ENCODE measurements at regions of chr7 and their contacts with region 1.

Region 1: GRCh38 chr7:132430861-132431822 is 145.1 kb downstream of the PLXNA4 start:
- DNase-seq: peak; percentile 63 to 76 (median 74)
- H3K4me3 ChIP-seq: peak overlapping the region in 1 of 2 donors; percentile 1
- H3K4me3 Mint-ChIP-seq: peak overlapping the region in 7 of 8 donors; percentile 5 to 73 (median 62)
- H3K27ac ChIP-seq: peak overlapping the region; percentile 35
- H3K27ac Mint-ChIP-seq: peak overlapping the region; percentile 39 to 91 (median 77)
- H3K4me1 ChIP-seq: peaks cover 72% of the 10 kb centered on the region
- H3K4me1 Mint-ChIP-seq: peaks cover 44 to 84% (median 67%) of the 10 kb centered on the region in 4 donors
- H3K27me3 ChIP-seq: no peaks in the 10 kb centered on the region
- H3K27me3 Mint-ChIP-seq: no peaks in the 10 kb centered on the region

Region 2: GRCh38 chr7:132472463-132473120 is 41.5 kb after region 1 on chr7:
- CTCF ChIA-PET with region 1: interaction called, 4 read pairs
- POLR2A ChIA-PET with region 1: interaction called, 3 read pairs
- intact Hi-C with region 1: loop called (anchors 2 kb)
- DNase-seq: no peak
- H3K4me3 ChIP-seq: no peak overlapping the region
- H3K4me3 Mint-ChIP-seq: peak overlapping the region in 1 of 8 donors; percentile 53
- H3K27ac ChIP-seq: no peak overlapping the region
- H3K27ac Mint-ChIP-seq: no peak overlapping the region
- H3K4me1 ChIP-seq: peaks cover 13% of the 10 kb centered on the region
- H3K4me1 Mint-ChIP-seq: peaks cover 8 to 19% (median 14%) of the 10 kb centered on the region in 4 donors
- H3K27me3 ChIP-seq: no peaks in the 10 kb centered on the region
- H3K27me3 Mint-ChIP-seq: peaks cover 2 to 3% of the 10 kb centered on the region in 2 donors

Region 3: DNA sequence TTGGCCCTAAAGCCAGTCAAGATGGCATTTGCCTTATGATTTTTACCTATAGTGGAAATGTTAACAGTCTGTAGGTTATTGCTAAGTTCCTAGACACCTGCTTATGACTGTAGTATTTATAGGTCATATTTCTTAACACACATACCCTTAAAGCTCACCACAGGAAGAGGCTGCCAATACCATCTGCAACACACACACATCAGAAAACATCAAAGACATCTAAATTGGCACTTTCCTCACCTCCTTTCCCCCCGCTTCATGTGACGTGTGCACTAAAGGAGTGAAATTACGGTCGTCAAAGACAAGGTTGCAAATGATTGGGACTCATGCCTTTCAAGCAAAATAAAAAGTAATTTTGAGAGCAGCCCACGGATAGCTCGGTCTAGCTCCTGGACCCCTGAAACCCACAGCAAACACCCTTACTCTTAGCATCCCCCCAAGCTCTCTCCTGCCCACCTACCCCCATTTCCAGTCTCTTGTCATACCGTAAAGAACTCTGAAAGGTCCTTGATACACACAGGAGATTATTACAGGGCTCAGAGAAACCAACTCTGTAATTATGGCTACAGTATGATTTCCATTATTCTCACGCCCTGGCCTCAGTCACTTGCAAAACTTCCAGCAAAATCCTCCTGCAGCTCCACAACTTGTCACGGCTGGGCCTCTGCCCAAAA is 54.6 kb after region 1 on chr7:
- CTCF ChIA-PET with region 1: no interaction called
- POLR2A ChIA-PET with region 1: interaction called, 6 read pairs
- intact Hi-C with region 1: loop called (anchors 2 kb)
- DNase-seq: peak; percentile 66 to 80 (median 78)
- H3K4me3 ChIP-seq: no peak overlapping the region
- H3K4me3 Mint-ChIP-seq: peak overlapping the region; percentile 26 to 81 (median 56)
- H3K27ac ChIP-seq: no peak overlapping the region
- H3K27ac Mint-ChIP-seq: peak overlapping the region; percentile 10 to 90 (median 84)
- H3K4me1 ChIP-seq: peaks cover 30% of the 10 kb centered on the region
- H3K4me1 Mint-ChIP-seq: peaks cover 18 to 50% (median 32%) of the 10 kb centered on the region in 4 donors
- H3K27me3 ChIP-seq: no peaks in the 10 kb centered on the region
- H3K27me3 Mint-ChIP-seq: peaks cover 0 to 5% of the 10 kb centered on the region in 2 donors

Measured in CD4-positive, alpha-beta memory T cell (primary cell).